CD14-positive monocyte (primary cell): ENCODE measurements at regions of chr22 and their contacts with region 1.

Region 1: GRCh38 chr22:46619830-46620501 is at the start of gene GRAMD4:
- DNase-seq: peak; percentile 60 to 82 (median 68)
- H3K4me3 ChIP-seq: peak within 1 kb of the TSS; percentile 8 to 73 (median 43)
- H3K4me3 Mint-ChIP-seq: peak within 1 kb of the TSS; percentile 62 to 84
- H3K27ac ChIP-seq: peak within 1 kb of the TSS; percentile 70 to 81
- H3K27ac Mint-ChIP-seq: peak within 1 kb of the TSS; percentile 62 to 89 (median 83)
- H3K4me1 ChIP-seq: peaks cover 70 to 85% of the 10 kb centered on the region in 2 donors
- H3K4me1 Mint-ChIP-seq: peaks cover 69% of the 10 kb centered on the region
- H3K27me3 ChIP-seq: no peaks in the 10 kb centered on the region
- H3K27me3 Mint-ChIP-seq: peaks cover 0 to 2% (median 1%) of the 10 kb centered on the region in 3 donors
- CTCF ChIP-seq: no peak
- polyA plus RNA-seq, gene GRAMD4: 9.5 to 33.3 (median 12.6) TPM

Region 2: GRCh38 chr22:46563381-46564083 is 56.4 kb before region 1 on chr22:
- intact Hi-C with region 1: loop called in 1 of 2 experiments (anchors 5 kb)
- DNase-seq: peak; percentile 75 to 83 (median 77)
- H3K4me3 ChIP-seq: no peak overlapping the region
- H3K4me3 Mint-ChIP-seq: peak overlapping the region in 1 of 2 donors; percentile 21
- H3K27ac ChIP-seq: no peak overlapping the region
- H3K27ac Mint-ChIP-seq: peak overlapping the region in 3 of 7 donors; percentile 1 to 55 (median 21)
- H3K4me1 ChIP-seq: peaks cover 34 to 40% of the 10 kb centered on the region in 2 donors
- H3K4me1 Mint-ChIP-seq: peaks cover 36% of the 10 kb centered on the region
- H3K27me3 ChIP-seq: no peaks in the 10 kb centered on the region
- H3K27me3 Mint-ChIP-seq: peaks cover 0 to 8% (median 0%) of the 10 kb centered on the region in 3 donors
- CTCF ChIP-seq: peak; percentile 77